Calu3 (cell line): ENCODE measurements at regions of chr3 and their contacts with region 1.

Region 1: GRCh38 chr3:120198305-120198878 is 86.6 kb downstream of the GPR156 start:
- DNase-seq: peak; percentile 28
- H3K4me3 Mint-ChIP-seq: no peak overlapping the region
- H3K27ac Mint-ChIP-seq: no peak overlapping the region
- H3K4me1 Mint-ChIP-seq: no peaks in the 10 kb centered on the region
- H3K27me3 Mint-ChIP-seq: no peaks in the 10 kb centered on the region
- CTCF ChIP-seq: no peak

Region 2: DNA sequence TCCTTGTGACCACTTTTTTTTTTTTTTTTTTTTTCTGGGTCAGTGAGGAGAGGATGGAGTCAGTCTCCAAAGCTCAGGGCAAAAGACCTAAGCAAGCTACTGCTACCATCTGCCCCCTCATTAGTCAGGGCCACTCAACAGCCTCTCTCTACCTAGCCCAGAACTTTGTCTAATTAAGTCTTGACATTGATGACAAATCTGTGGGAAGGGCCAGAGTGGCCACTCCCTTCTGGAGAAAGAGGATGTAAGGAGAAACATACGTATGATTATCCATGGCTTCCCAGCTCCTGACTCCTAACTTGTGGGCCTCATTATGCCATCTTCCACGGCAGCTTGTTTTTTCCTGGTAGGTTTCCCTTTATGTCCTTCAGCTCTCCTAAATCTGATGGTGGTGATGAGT is 378.6 kb before region 1 on chr3:
- CTCF ChIA-PET with region 1: no interaction called
- intact Hi-C with region 1: loop called (anchors 5 kb)
- DNase-seq: no peak
- H3K4me3 Mint-ChIP-seq: no peak overlapping the region
- H3K27ac Mint-ChIP-seq: no peak overlapping the region
- H3K4me1 Mint-ChIP-seq: no peaks in the 10 kb centered on the region
- H3K27me3 Mint-ChIP-seq: no peaks in the 10 kb centered on the region
- CTCF ChIP-seq: no peak

Region 3: DNA sequence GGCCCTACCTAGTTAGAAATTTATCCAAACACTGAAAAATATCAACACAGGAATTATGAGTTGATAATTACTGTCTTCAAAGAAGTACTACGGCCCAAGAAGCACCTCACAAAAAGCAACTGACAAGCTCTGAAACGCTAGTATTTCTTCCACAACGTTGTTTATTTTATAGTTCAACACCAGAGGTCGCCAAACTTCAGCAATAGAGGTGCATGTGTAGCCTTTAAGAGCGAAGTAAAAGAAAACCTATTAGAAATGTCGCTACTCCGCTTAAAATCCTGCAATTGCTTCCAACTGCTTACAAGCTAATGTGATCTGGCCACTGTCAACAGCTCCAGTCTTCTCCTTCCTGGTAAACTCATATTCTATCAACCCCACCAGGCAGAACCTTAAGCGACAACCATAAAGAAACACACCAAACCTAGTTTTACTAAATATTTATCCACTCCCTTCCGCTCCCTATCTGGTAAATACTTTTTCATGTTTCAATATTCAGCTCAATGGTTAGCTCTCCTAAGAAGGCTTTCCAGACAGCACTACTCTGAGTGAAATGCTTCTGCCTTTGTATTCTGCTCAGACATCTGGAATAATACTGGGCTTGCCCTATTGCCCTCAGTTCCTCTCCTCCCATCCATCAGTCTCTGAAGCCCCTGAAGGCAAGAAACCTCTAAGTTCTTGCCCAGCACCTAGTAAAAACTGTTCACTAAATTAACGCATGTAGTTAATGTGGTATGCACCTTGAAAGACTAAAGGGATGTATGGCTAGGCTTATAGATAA is 306.3 kb before region 1 on chr3:
- CTCF ChIA-PET with region 1: interaction called, 3 read pairs
- intact Hi-C with region 1: loop called (anchors 1 kb)
- DNase-seq: peak; percentile 60
- H3K4me3 Mint-ChIP-seq: no peak overlapping the region
- H3K27ac Mint-ChIP-seq: no peak overlapping the region
- H3K4me1 Mint-ChIP-seq: peaks cover 17% of the 10 kb centered on the region
- H3K27me3 Mint-ChIP-seq: no peaks in the 10 kb centered on the region
- CTCF ChIP-seq: peak; percentile 31